Tibial artery (tissue), 4 donors: ENCODE measurements at regions of chr18 and their contacts with region 1.

Region 1: DNA sequence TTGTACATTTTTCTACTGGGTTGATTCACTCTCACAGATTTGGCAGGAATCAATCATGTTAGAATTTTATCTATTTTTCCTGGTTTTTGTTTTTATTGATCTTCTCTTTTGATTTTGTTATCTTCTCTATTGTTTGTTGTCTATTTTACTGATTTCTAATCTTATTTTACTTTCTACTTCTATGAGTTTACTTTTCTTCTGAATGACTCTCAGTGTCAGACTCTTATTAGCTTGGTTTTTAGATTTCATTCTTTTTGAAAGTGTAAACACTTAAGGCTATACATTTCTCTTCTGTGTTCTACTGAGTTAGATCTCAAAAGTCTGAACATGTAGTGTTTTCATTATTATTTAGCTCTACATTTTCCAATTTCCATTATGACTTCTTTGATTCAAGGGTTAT is 47.1 kb downstream of the THOC1 start:
- DNase-seq: no peak
- H3K4me3 ChIP-seq: no peak overlapping the region
- H3K27ac ChIP-seq: no peak overlapping the region
- H3K4me1 ChIP-seq: no peaks in the 10 kb centered on the region
- H3K27me3 ChIP-seq: no peaks in the 10 kb centered on the region
- CTCF ChIP-seq: no peak

Region 2: GRCh38 chr18:250688-251422 is 30.1 kb after region 1 on chr18:
- intact Hi-C with region 1: loop called (anchors 1 kb)
- DNase-seq: no peak
- H3K4me3 ChIP-seq: no peak overlapping the region
- H3K27ac ChIP-seq: no peak overlapping the region
- H3K4me1 ChIP-seq: no peaks in the 10 kb centered on the region
- H3K27me3 ChIP-seq: no peaks in the 10 kb centered on the region
- CTCF ChIP-seq: no peak

Region 3: GRCh38 chr18:801137-801536 is 580.4 kb after region 1 on chr18:
- intact Hi-C with region 1: no loop called
- DNase-seq: no peak
- H3K4me3 ChIP-seq: no peak overlapping the region
- H3K27ac ChIP-seq: no peak overlapping the region
- H3K4me1 ChIP-seq: peaks cover 0 to 8% (median 2%) of the 10 kb centered on the region in 4 donors
- H3K27me3 ChIP-seq: no peaks in the 10 kb centered on the region
- CTCF ChIP-seq: no peak